B cell (primary cell): ENCODE measurements at regions of chr15 and their contacts with region 1.

Region 1: GRCh38 chr15:65638681-65639089 is 16.9 kb downstream of the SLC24A1 start:
- DNase-seq: peak; percentile 81
- ATAC-seq: peak; percentile 81
- H3K4me3 ChIP-seq: no peak overlapping the region
- H3K4me3 Mint-ChIP-seq: peak overlapping the region; percentile 0
- H3K27ac ChIP-seq: no peak overlapping the region
- H3K27ac Mint-ChIP-seq: peak overlapping the region; percentile 8
- H3K4me1 ChIP-seq: peaks cover 0 to 10% of the 10 kb centered on the region in 2 donors
- H3K4me1 Mint-ChIP-seq: peaks cover 10% of the 10 kb centered on the region
- H3K27me3 ChIP-seq: no peaks in the 10 kb centered on the region
- H3K27me3 Mint-ChIP-seq: no peaks in the 10 kb centered on the region
- CTCF ChIP-seq: peak; percentile 86

Region 2: GRCh38 chr15:65541231-65541820 is 97.4 kb before region 1 on chr15:
- CTCF ChIA-PET with region 1: no interaction called
- POLR2A ChIA-PET with region 1: no interaction called
- intact Hi-C with region 1: no loop called
- DNase-seq: no peak
- ATAC-seq: no peak
- H3K4me3 ChIP-seq: no peak overlapping the region
- H3K4me3 Mint-ChIP-seq: no peak overlapping the region
- H3K27ac ChIP-seq: no peak overlapping the region
- H3K27ac Mint-ChIP-seq: no peak overlapping the region
- H3K4me1 ChIP-seq: no peaks in the 10 kb centered on the region
- H3K4me1 Mint-ChIP-seq: peaks cover 3% of the 10 kb centered on the region
- H3K27me3 ChIP-seq: no peaks in the 10 kb centered on the region
- H3K27me3 Mint-ChIP-seq: no peaks in the 10 kb centered on the region
- CTCF ChIP-seq: no peak

Region 3: DNA sequence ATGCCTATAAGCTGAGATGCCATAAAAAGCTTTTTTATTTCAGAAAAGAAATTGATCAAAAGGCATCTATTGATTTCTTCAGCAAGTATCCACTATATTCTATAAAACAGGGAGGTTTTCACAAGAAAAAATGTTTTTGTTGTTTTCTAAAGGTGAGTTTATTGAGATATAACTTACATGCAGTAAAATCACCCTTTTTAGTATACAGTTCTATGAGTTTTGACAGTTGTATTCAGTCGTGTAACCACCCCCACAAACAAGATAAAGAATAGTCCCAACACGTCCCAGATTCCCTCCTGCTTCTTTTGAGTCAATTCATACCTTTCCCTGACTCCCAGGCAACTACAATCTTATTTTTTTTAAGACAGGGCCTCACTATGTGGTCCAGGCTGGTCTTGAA is 35.6 kb before region 1 on chr15:
- CTCF ChIA-PET with region 1: no interaction called
- POLR2A ChIA-PET with region 1: no interaction called
- intact Hi-C with region 1: no loop called
- DNase-seq: no peak
- ATAC-seq: no peak
- H3K4me3 ChIP-seq: no peak overlapping the region
- H3K4me3 Mint-ChIP-seq: no peak overlapping the region
- H3K27ac ChIP-seq: no peak overlapping the region
- H3K27ac Mint-ChIP-seq: no peak overlapping the region
- H3K4me1 ChIP-seq: no peaks in the 10 kb centered on the region
- H3K4me1 Mint-ChIP-seq: peaks cover 3% of the 10 kb centered on the region
- H3K27me3 ChIP-seq: no peaks in the 10 kb centered on the region
- H3K27me3 Mint-ChIP-seq: no peaks in the 10 kb centered on the region
- CTCF ChIP-seq: no peak

Region 4: GRCh38 chr15:65832549-65833364 is 194.1 kb after region 1 on chr15:
- CTCF ChIA-PET with region 1: interaction called, 13 read pairs
- POLR2A ChIA-PET with region 1: no interaction called
- intact Hi-C with region 1: no loop called
- DNase-seq: peak; percentile 68
- ATAC-seq: peak; percentile 60
- H3K4me3 ChIP-seq: peak overlapping the region in 3 of 5 experiments; percentile 21 to 52 (median 25)
- H3K4me3 Mint-ChIP-seq: peak overlapping the region; percentile 80
- H3K27ac ChIP-seq: peak overlapping the region; percentile 70 to 79
- H3K27ac Mint-ChIP-seq: peak overlapping the region; percentile 96
- H3K4me1 ChIP-seq: peaks cover 37 to 40% of the 10 kb centered on the region in 2 donors
- H3K4me1 Mint-ChIP-seq: peaks cover 56% of the 10 kb centered on the region
- H3K27me3 ChIP-seq: no peaks in the 10 kb centered on the region
- H3K27me3 Mint-ChIP-seq: no peaks in the 10 kb centered on the region
- CTCF ChIP-seq: no peak

Region 5: DNA sequence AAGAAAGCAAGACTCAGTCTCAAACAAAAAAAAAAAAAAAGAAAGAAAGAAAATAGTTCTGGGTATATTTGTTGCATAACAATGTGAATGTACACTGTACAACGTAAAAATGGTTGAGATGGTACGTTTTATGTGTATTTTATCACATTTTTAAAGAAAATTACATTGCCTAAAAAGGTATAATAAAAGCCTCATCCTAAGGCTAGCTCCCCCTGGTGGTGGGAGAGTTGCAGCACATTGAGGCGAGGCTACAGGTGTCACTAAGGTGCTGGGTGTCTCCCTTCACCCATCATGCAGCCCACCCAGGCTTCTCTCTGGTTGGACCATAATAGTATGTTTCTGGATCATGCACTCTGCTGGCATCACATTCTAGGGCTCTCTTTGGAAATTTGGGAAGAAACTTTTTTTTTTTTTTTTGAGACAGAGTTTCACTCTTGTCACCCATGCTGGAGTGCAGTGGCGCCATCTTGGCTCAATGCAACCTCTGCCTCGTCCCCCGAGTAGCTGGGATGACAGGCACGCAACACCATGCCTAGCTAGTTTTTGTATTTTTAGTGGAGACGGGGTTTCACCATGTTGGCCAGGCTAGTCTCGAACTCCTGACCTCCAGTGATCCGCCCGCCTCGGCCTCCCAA is 218.3 kb after region 1 on chr15:
- CTCF ChIA-PET with region 1: interaction called, 42 read pairs
- POLR2A ChIA-PET with region 1: no interaction called
- intact Hi-C with region 1: loop called (anchors 1 kb)
- DNase-seq: peak; percentile 85
- ATAC-seq: peak; percentile 88
- H3K4me3 ChIP-seq: no peak overlapping the region
- H3K4me3 Mint-ChIP-seq: no peak overlapping the region
- H3K27ac ChIP-seq: no peak overlapping the region
- H3K27ac Mint-ChIP-seq: no peak overlapping the region
- H3K4me1 ChIP-seq: no peaks in the 10 kb centered on the region
- H3K4me1 Mint-ChIP-seq: peaks cover 11% of the 10 kb centered on the region
- H3K27me3 ChIP-seq: no peaks in the 10 kb centered on the region
- H3K27me3 Mint-ChIP-seq: no peaks in the 10 kb centered on the region
- CTCF ChIP-seq: peak; percentile 95

Region 6: GRCh38 chr15:66287461-66288057 is 648.9 kb after region 1 on chr15:
- CTCF ChIA-PET with region 1: interaction called, 3 read pairs
- POLR2A ChIA-PET with region 1: no interaction called
- intact Hi-C with region 1: loop called (anchors 2 kb)
- DNase-seq: peak; percentile 57
- ATAC-seq: peak; percentile 51
- H3K4me3 ChIP-seq: no peak overlapping the region
- H3K4me3 Mint-ChIP-seq: no peak overlapping the region
- H3K27ac ChIP-seq: no peak overlapping the region
- H3K27ac Mint-ChIP-seq: no peak overlapping the region
- H3K4me1 ChIP-seq: peaks cover 6 to 8% of the 10 kb centered on the region in 2 donors
- H3K4me1 Mint-ChIP-seq: peaks cover 22% of the 10 kb centered on the region
- H3K27me3 ChIP-seq: no peaks in the 10 kb centered on the region
- H3K27me3 Mint-ChIP-seq: no peaks in the 10 kb centered on the region
- CTCF ChIP-seq: peak; percentile 85